K562 (cell line): ENCODE measurements at regions of chr3 and their contacts with region 1.

Region 1: DNA sequence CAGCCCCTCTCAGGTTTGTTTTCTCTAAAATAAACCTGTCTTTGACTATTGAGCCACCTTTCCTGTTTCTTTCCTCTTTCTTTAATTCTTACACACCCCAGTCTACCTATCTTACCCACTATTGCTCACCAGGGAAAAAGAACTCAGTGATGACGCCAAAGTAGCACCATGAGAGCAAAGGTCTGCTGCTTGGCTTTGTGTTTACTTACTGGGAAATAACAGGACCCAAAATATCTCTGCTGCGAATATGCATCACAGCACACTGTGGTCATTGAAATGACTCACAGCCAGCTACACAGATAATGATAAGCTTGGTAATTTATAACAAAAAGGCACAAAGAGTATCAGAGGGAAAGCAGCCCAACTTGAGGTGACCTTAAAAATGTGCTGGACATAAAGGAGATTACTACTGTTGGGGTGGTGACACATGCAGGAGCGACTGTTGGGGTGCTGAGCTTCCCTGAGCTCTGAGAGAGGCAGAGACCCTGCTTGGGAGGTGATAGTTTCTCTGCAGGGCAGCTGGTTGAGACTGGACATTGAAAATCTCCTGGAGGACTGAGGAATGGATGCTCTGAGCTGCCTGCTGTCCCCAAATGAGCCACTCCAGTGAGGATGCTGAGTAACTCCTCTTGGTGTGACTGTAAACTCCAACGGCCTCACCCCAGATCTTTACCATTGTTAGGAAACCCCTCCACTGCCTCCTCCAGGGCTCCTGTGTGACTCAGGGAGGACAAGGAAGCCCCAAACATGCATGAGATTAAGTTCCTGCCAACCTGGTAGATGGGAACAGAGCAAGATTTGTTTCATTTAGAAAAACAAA is 14.5 kb downstream of the EFCAB12 start:
- DNase-seq: peak; percentile 32 to 78 (median 50)
- ATAC-seq: peak; percentile 85
- H3K4me3 ChIP-seq: no peak overlapping the region
- H3K27ac ChIP-seq: peak overlapping the region; percentile 68
- H3K4me1 ChIP-seq: peaks cover 27 to 43% of the 10 kb centered on the region in 2 experiments
- H3K27me3 ChIP-seq: no peaks in the 10 kb centered on the region
- CTCF ChIP-seq: no peak
- EP300 ChIP-seq: peak; percentile 76; the same call in 1 of the 2 replicates
- POLR2A ChIP-seq: no peak
- RAD21 ChIP-seq: no peak

Region 2: DNA sequence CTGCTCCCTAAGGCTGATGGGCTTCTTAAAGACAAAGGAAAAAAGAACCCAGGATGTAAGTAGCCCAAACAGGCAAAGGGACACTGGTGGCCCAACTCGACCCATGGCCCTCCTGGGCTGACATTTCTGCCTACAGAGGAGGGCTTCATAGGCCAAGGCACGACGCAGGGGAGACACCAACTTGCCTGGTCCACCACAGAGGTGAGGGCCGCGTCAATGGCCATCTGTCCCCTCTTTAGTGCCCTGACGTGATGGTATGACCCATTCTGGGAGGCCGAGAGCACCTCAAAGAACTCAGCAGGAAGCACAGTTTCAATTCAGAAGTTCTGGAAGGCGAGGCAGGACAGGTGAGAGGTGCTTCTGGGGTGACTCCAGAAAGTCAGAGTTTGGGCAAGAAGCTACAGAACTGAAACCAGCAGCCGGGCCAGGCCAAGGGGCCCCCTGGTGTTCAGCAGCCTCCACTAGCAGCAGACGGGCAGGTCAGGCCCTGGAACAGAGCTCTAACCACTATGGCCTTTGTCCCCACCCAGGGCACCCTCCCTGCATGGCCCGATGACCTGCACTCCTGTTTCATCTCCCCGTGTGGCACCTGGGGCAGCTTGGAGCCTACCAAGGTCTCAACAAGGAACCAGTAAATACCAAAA is 90.1 kb before region 1 on chr3:
- CTCF ChIA-PET with region 1: no interaction called
- POLR2A ChIA-PET with region 1: no interaction called
- in situ Hi-C with region 1: no loop called
- intact Hi-C with region 1: loop called (anchors 10 kb)
- DNase-seq: peak; percentile 25 to 45 (median 28)
- ATAC-seq: peak; percentile 76
- H3K4me3 ChIP-seq: no peak overlapping the region
- H3K27ac ChIP-seq: no peak overlapping the region
- H3K4me1 ChIP-seq: peaks cover 4 to 20% of the 10 kb centered on the region in 2 experiments; a peak in 4 of 5 replicates
- H3K27me3 ChIP-seq: no peaks in the 10 kb centered on the region
- CTCF ChIP-seq: peak; percentile 27 to 36 (median 32); a peak in 3 of 6 replicates
- EP300 ChIP-seq: no peak
- POLR2A ChIP-seq: no peak
- RAD21 ChIP-seq: no peak; a peak in 1 of 4 replicates

Region 3: GRCh38 chr3:129399145-129399894 is 14.6 kb before region 1 on chr3:
- CTCF ChIA-PET with region 1: no interaction called
- POLR2A ChIA-PET with region 1: interaction called, 21 read pairs
- in situ Hi-C with region 1: no loop called
- intact Hi-C with region 1: loop called (anchors 1 kb)
- DNase-seq: peak; percentile 79 to 92 (median 81)
- ATAC-seq: peak; percentile 86
- H3K4me3 ChIP-seq: peak overlapping the region; percentile 73
- H3K27ac ChIP-seq: peak overlapping the region; percentile 87
- H3K4me1 ChIP-seq: peaks cover 0 to 7% of the 10 kb centered on the region in 2 experiments; a peak in 4 of 5 replicates
- H3K27me3 ChIP-seq: no peaks in the 10 kb centered on the region
- CTCF ChIP-seq: peak; percentile 56 to 73 (median 71)
- EP300 ChIP-seq: no peak
- POLR2A ChIP-seq: no peak; the same call in 1 of the 2 replicates
- RAD21 ChIP-seq: no peak

Region 4: GRCh38 chr3:129428376-129429079 is 14.6 kb after region 1 on chr3 and contains the start of gene EFCAB12:
- CTCF ChIA-PET with region 1: interaction called, 3 read pairs
- POLR2A ChIA-PET with region 1: interaction called, 26 read pairs
- in situ Hi-C with region 1: no loop called
- intact Hi-C with region 1: no loop called
- DNase-seq: peak; percentile 91 to 95 (median 92)
- ATAC-seq: peak; percentile 97
- H3K4me3 ChIP-seq: peak within 1 kb of the TSS; percentile 41
- H3K27ac ChIP-seq: peak within 1 kb of the TSS; percentile 64
- H3K4me1 ChIP-seq: peaks cover 27 to 35% of the 10 kb centered on the region in 2 experiments; a peak in 4 of 5 replicates
- H3K27me3 ChIP-seq: no peaks in the 10 kb centered on the region
- CTCF ChIP-seq: no peak; a peak in 1 of 6 replicates
- EP300 ChIP-seq: no peak
- POLR2A ChIP-seq: peak; percentile 49; the same call in 1 of the 2 replicates
- RAD21 ChIP-seq: no peak; a peak in 1 of 4 replicates
- polyA plus RNA-seq, gene EFCAB12: 0.08 TPM in 1 of 2 experiments, not detected in the other

Region 5: DNA sequence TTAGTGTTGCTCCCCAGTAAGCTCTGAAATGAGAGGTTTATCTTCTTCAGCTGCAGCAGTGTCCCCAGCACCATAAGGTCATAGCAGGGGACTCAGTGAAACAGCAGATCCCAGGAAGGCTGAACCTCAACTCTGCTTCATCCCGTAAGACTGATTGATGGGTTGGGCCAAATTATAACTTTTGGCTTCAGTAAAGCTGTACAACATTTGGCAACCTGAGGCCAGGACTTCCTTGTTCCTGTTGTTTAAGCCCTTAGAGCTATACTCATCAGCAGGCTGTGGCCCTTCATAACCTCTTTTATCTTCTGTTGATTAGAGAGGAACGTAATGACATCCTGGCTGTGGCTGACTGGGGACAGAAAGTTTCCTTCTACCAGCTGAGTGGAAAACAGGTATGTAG is 55.1 kb after region 1 on chr3:
- CTCF ChIA-PET with region 1: no interaction called
- POLR2A ChIA-PET with region 1: no interaction called
- in situ Hi-C with region 1: no loop called
- intact Hi-C with region 1: no loop called
- DNase-seq: peak in 1 of 4 experiments; percentile 30
- ATAC-seq: peak; percentile 78
- H3K4me3 ChIP-seq: no peak overlapping the region
- H3K27ac ChIP-seq: 0 out of 3 replicates have a peak overlapping the region, but pooled peaks have one; percentile 11
- H3K4me1 ChIP-seq: peaks cover 0 to 13% of the 10 kb centered on the region in 2 experiments; a peak in 2 of 5 replicates
- H3K27me3 ChIP-seq: no peaks in the 10 kb centered on the region
- CTCF ChIP-seq: no peak
- EP300 ChIP-seq: no peak
- POLR2A ChIP-seq: no peak
- RAD21 ChIP-seq: no peak

Region 6: GRCh38 chr3:130266817-130267216 is 852.9 kb after region 1 on chr3:
- CTCF ChIA-PET with region 1: no interaction called
- POLR2A ChIA-PET with region 1: no interaction called
- in situ Hi-C with region 1: no loop called
- intact Hi-C with region 1: no loop called
- DNase-seq: no peak
- ATAC-seq: no peak
- H3K4me3 ChIP-seq: no peak overlapping the region
- H3K27ac ChIP-seq: no peak overlapping the region
- H3K4me1 ChIP-seq: peaks cover 0 to 6% of the 10 kb centered on the region in 2 experiments; a peak in 1 of 5 replicates
- H3K27me3 ChIP-seq: no peaks in the 10 kb centered on the region
- CTCF ChIP-seq: no peak
- EP300 ChIP-seq: no peak
- POLR2A ChIP-seq: no peak
- RAD21 ChIP-seq: no peak